ENCODE measurements at regions of chr7 and their contacts with region 1.

Region 1: DNA sequence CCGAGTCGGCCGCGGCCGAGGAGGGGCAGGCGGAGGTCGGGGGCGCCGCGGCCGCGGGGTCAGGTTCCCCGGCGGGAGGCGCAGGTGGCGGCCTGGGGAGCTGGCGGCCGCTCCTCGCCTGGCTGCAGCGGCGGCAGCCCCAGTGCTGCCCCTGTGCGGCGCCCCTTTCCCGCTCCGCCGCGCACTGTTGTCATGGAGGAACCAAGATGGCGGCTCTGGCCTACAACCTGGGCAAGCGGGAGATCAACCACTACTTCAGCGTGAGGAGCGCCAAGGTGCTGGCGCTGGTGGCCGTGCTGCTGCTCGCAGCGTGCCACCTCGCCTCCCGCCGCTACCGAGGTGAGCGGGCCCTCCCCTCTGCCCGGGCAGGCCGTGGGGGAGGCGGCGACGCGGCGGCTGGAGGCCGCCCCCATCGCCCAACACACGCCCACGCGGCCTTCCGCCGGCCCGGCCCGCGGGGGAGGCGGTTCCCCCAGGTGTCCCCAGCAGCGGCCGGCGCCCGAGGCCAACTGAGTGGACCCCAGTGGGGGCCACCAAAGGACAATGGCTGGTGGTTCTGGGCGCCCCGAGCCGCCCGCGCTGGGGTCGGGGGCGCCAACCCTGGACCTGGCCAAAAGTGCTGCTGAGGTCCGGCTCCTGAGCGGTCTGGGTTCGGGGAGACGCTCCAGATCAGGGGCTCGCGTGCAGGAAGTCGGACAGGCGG is 421 bp downstream of the CASD1 start:
- DNase-seq: peak; percentile 90
- H3K4me3 Mint-ChIP-seq: peak overlapping the region; percentile 80
- H3K27ac Mint-ChIP-seq: peak overlapping the region; percentile 88
- H3K4me1 Mint-ChIP-seq: peaks cover 34% of the 10 kb centered on the region
- H3K27me3 Mint-ChIP-seq: no peaks in the 10 kb centered on the region

Region 2: DNA sequence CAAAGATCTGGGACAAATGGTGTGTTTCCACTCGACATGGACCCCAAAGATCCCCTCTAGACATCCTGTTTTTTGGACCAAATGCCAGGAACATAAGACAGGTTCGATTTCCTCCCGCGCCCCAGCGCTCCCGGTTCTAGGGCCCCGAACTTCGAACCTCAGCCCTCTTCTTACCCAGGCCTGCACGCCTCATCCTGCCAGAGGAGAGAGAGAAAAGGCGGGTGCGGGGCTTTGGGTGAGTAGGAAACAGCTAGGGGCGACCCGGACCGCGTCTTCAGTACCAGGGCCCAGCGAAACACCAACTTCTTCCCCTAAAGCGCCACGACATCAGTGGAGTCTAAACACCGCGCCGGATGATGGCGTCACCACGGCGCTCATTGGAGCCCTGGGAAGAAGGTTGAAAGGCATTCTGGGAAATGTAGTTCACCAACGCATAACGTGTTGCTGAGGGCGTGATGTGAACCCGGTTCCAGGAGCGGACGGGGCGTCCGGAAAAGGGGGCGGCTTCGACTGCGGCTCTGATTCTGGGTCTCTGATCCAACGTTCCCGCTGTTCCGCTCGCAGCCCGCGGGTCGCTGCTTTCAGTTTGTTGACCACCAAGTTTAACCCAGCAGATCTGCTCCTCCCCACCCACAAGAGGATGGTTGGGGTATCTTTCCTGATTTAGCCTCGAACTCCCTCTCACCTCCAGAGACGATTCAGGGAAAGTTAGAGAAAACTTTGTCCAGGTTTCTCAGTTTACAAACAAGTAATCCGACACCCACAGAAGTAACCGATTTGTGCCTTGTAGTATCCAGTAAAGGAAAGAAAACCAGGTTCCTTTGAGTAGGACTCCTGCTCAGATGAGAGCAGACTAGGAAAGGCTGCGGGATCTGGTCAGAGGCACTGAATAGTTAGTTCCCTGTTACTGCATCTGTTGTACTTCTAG is 505.7 kb before region 1 on chr7 and contains the start of gene BET1:
- intact Hi-C with region 1: loop called (anchors 10 kb)
- DNase-seq: peak; percentile 98
- H3K4me3 Mint-ChIP-seq: peak within 1 kb of the TSS; percentile 94
- H3K27ac Mint-ChIP-seq: peak within 1 kb of the TSS; percentile 96
- H3K4me1 Mint-ChIP-seq: peaks cover 20% of the 10 kb centered on the region
- H3K27me3 Mint-ChIP-seq: peaks cover 17% of the 10 kb centered on the region
- total RNA-seq, gene BET1: 19.1 and 20.0 TPM in 2 replicates

Region 3: GRCh38 chr7:94556028-94556427 is 46.0 kb after region 1 on chr7:
- intact Hi-C with region 1: loop called (anchors 5 kb)
- DNase-seq: no peak
- H3K4me3 Mint-ChIP-seq: no peak overlapping the region
- H3K27ac Mint-ChIP-seq: no peak overlapping the region
- H3K4me1 Mint-ChIP-seq: no peaks in the 10 kb centered on the region
- H3K27me3 Mint-ChIP-seq: no peaks in the 10 kb centered on the region

Region 4: GRCh38 chr7:94620703-94621118 is 110.7 kb after region 1 on chr7:
- intact Hi-C with region 1: loop called (anchors 5 kb)
- DNase-seq: peak; percentile 77
- H3K4me3 Mint-ChIP-seq: peak overlapping the region; percentile 11
- H3K27ac Mint-ChIP-seq: peak overlapping the region; percentile 38
- H3K4me1 Mint-ChIP-seq: peaks cover 11% of the 10 kb centered on the region
- H3K27me3 Mint-ChIP-seq: peaks cover 8% of the 10 kb centered on the region

Measured in activated CD4-positive, alpha-beta T cell treated with anti-CD3 and anti-CD28 coated beads, Interleukin-2, amount 10 ng/mL, durations not matched to agents 24 days and 14 days (primary cell).